Activated CD4-positive, alpha-beta T cell treated with anti-CD3 and anti-CD28 coated beads for 36 hours (primary cell): ENCODE measurements at regions of chr12 and their contacts with region 1.

Region 1: GRCh38 chr12:76559400-76560085 is at the start of gene OSBPL8:
- DNase-seq: peak; percentile 98
- ATAC-seq: peak; percentile 70
- H3K4me3 Mint-ChIP-seq: peak within 1 kb of the TSS; percentile 86
- H3K27ac Mint-ChIP-seq: peak within 1 kb of the TSS; percentile 98
- H3K4me1 Mint-ChIP-seq: peaks cover 24% of the 10 kb centered on the region
- H3K27me3 Mint-ChIP-seq: no peaks in the 10 kb centered on the region
- total RNA-seq, gene OSBPL8: 70.2 to 78.5 TPM

Region 2: GRCh38 chr12:75511116-75512048 is 1048.2 kb before region 1 on chr12 and contains the start of gene KRR1:
- CTCF ChIA-PET with region 1: no interaction called
- POLR2A ChIA-PET with region 1: no interaction called
- intact Hi-C with region 1: loop called in 1 of 2 experiments (anchors 1 kb)
- DNase-seq: peak; percentile 94
- ATAC-seq: peak; percentile 96
- H3K4me3 Mint-ChIP-seq: peak within 1 kb of the TSS; percentile 100
- H3K27ac Mint-ChIP-seq: peak within 1 kb of the TSS; percentile 99
- H3K4me1 Mint-ChIP-seq: peaks cover 33% of the 10 kb centered on the region
- H3K27me3 Mint-ChIP-seq: no peaks in the 10 kb centered on the region
- total RNA-seq, gene KRR1: 122 to 147 TPM

Region 3: GRCh38 chr12:76158518-76159321 is 400.8 kb before region 1 on chr12:
- CTCF ChIA-PET with region 1: no interaction called
- POLR2A ChIA-PET with region 1: no interaction called
- intact Hi-C with region 1: loop called in 1 of 2 experiments (anchors 1 kb)
- DNase-seq: peak; percentile 85
- ATAC-seq: peak; percentile 97
- H3K4me3 Mint-ChIP-seq: peak overlapping the region; percentile 18
- H3K27ac Mint-ChIP-seq: peak overlapping the region; percentile 26
- H3K4me1 Mint-ChIP-seq: peaks cover 15% of the 10 kb centered on the region
- H3K27me3 Mint-ChIP-seq: peaks cover 2% of the 10 kb centered on the region

Region 4: DNA sequence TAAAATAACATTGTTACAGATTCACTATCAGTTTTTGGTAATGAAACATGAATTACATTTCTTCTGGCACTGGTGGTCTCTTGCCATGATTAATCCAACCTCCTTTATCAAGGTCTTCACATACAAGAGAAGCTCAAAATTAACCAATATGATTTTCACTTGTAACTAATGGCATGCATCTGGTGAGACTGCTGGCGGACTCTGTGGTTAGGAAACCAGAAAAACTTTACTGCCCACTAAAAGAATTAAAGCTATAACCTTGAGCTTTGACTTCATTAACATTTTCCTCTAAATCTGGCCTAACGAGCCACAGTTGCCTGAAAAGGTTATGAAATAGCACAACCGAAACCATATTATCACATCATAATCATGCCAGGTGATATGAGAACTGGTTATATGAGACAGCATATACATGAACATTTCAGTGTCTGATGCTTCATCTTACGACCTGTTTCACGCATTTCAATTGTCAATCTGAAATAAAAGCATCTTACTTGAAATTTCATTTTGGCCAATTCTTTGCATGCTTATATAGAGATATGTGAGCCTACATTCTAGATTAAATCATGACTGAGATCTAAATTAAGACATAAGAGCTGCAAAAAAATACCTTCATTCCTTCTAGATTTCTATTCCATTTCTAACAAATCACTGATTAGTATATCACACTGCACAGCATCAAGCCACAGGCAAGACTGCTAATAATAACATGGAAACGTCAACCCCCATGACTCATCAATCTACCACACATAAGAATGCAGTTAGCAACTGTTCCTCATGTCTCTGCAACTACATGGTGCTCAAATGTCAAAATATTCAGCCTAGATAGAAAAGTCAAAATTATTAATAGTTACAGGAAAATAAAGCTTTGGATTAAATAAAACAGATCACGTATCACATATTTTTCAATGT is 89.3 kb before region 1 on chr12:
- CTCF ChIA-PET with region 1: no interaction called
- POLR2A ChIA-PET with region 1: interaction called, 5 read pairs
- intact Hi-C with region 1: loop called in 1 of 2 experiments (anchors 1 kb)
- DNase-seq: no peak
- ATAC-seq: peak; percentile 87
- H3K4me3 Mint-ChIP-seq: no peak overlapping the region
- H3K27ac Mint-ChIP-seq: no peak overlapping the region
- H3K4me1 Mint-ChIP-seq: peaks cover 10% of the 10 kb centered on the region
- H3K27me3 Mint-ChIP-seq: no peaks in the 10 kb centered on the region

Region 5: DNA sequence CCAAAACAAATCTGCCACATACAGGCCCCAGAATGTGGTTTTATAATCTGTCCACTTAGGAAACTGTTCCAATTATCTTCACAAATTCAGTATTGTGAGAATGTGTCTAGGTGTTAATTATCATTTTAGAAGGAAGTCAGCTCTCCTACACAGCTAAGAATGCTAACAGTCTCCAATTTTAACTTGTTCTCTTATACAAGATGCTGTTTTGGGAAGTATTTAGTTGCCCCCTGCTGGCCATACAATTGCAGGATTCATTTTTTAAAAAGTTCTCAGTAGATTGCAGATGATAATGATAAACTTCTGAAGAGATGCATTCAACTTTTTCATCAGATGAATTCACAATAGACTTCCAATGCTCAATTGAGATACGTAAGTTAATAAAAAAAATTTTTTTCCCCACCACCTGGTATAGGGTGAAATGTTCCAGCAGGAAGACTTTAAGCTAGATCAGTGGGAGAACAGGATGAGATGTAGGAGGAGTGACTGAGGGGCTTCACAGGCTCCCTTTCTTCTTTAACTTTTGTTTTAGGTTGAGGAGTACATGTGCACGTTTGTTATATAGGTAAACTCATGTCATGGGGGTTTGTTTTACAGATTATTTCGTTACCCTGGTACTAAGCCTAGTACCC is 27.3 kb after region 1 on chr12:
- CTCF ChIA-PET with region 1: interaction called, 7 read pairs
- POLR2A ChIA-PET with region 1: no interaction called
- intact Hi-C with region 1: loop called in 1 of 2 experiments (anchors 2 kb)
- DNase-seq: peak; percentile 44
- ATAC-seq: no peak
- H3K4me3 Mint-ChIP-seq: no peak overlapping the region
- H3K27ac Mint-ChIP-seq: no peak overlapping the region
- H3K4me1 Mint-ChIP-seq: no peaks in the 10 kb centered on the region
- H3K27me3 Mint-ChIP-seq: no peaks in the 10 kb centered on the region

Region 6: GRCh38 chr12:76878899-76879709 is 319.6 kb after region 1 on chr12 and contains the start of gene CSRP2:
- CTCF ChIA-PET with region 1: no interaction called
- POLR2A ChIA-PET with region 1: no interaction called
- intact Hi-C with region 1: loop called in 1 of 2 experiments (anchors 2 kb)
- DNase-seq: peak; percentile 86
- ATAC-seq: peak; percentile 95
- H3K4me3 Mint-ChIP-seq: peak within 1 kb of the TSS; percentile 76
- H3K27ac Mint-ChIP-seq: peak within 1 kb of the TSS; percentile 23
- H3K4me1 Mint-ChIP-seq: peaks cover 14% of the 10 kb centered on the region
- H3K27me3 Mint-ChIP-seq: peaks cover 37% of the 10 kb centered on the region
- total RNA-seq, gene CSRP2: 1.8 to 2.0 TPM